Activated CD8-positive, alpha-beta T cell treated with anti-CD3 and anti-CD28 coated beads for 36 hours (primary cell): ENCODE measurements at regions of chr16 and their contacts with region 1.

Region 1: GRCh38 chr16:55842369-55843104 is 9.6 kb upstream of the CES1 start:
- DNase-seq: peak; percentile 25
- ATAC-seq: peak; percentile 45
- H3K4me3 Mint-ChIP-seq: no peak overlapping the region
- H3K27ac Mint-ChIP-seq: no peak overlapping the region
- H3K4me1 Mint-ChIP-seq: no peaks in the 10 kb centered on the region
- H3K27me3 Mint-ChIP-seq: peaks cover 15% of the 10 kb centered on the region
- CTCF ChIP-seq: peak; percentile 80

Region 2: GRCh38 chr16:55711959-55712876 is 130.3 kb before region 1 on chr16:
- CTCF ChIA-PET with region 1: interaction called, 16 read pairs
- POLR2A ChIA-PET with region 1: no interaction called
- intact Hi-C with region 1: loop called (anchors 1 kb)
- DNase-seq: peak; percentile 83
- ATAC-seq: peak; percentile 58
- H3K4me3 Mint-ChIP-seq: no peak overlapping the region
- H3K27ac Mint-ChIP-seq: no peak overlapping the region
- H3K4me1 Mint-ChIP-seq: no peaks in the 10 kb centered on the region
- H3K27me3 Mint-ChIP-seq: peaks cover 18% of the 10 kb centered on the region
- CTCF ChIP-seq: peak; percentile 83